ENCODE measurements at regions of chr10 and their contacts with region 1.

Region 1: GRCh38 chr10:48627984-48628609 is 23.2 kb upstream of the ARHGAP22 start:
- DNase-seq: no peak
- H3K4me3 ChIP-seq: no peak overlapping the region
- H3K27ac ChIP-seq: no peak overlapping the region
- H3K4me1 ChIP-seq: no peaks in the 10 kb centered on the region
- H3K27me3 ChIP-seq: no peaks in the 10 kb centered on the region
- CTCF ChIP-seq: no peak

Region 2: GRCh38 chr10:48545462-48546145 is 82.5 kb before region 1 on chr10:
- CTCF ChIA-PET with region 1: no interaction called
- dilution Hi-C with region 1: loop called (anchors 5 kb)
- in situ Hi-C with region 1: no loop called
- intact Hi-C with region 1: no loop called
- DNase-seq: no peak
- H3K4me3 ChIP-seq: no peak overlapping the region
- H3K27ac ChIP-seq: no peak overlapping the region
- H3K4me1 ChIP-seq: no peaks in the 10 kb centered on the region
- H3K27me3 ChIP-seq: no peaks in the 10 kb centered on the region
- CTCF ChIP-seq: no peak